ENCODE measurements at regions of chr12 and their contacts with region 1.

Region 1: DNA sequence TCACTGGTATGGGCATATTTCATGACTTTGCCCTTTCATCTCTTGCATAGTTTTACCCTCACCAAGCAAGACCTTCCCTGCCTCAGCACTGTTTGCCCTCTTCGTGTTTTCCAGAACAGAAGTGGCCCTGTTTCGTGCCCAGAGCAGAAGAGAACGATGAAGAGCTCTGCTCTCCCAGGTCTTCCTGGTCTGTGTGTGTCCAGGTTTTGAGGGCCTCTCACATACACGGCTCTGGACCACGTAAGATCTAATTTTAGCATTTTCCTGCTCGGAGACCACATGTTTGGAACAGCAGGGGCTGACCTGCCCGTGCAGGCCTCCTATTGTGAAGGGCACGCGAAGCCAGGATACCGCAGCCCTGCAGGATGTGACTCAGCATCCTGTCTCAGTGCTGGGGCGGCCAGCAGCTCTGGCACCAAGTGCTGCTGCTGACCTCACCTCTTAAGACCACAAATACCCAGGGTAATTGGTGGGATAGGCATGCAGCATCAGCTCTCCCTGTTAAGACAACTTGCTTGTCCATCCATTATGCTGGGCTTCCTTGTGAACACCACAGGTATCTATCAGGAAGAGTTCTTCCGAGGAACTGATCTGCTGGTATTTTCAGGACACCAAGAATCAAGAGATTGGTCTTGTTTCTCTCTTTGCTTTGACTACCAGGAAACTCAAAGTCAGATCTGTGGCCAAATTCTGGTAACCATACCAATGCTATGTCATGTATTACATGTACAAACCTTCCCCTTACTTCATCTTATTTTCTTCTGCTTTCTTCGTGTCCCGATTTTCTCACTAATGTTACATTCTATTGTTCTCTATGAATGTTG is 19.0 kb downstream of the SSH1 start:
- DNase-seq: peak; percentile 94 to 98 (median 98)
- H3K4me3 ChIP-seq: peak overlapping the region in 2 of 7 experiments; percentile 23 to 49
- H3K27ac ChIP-seq: peak overlapping the region; percentile 80 to 92
- H3K4me1 ChIP-seq: peaks cover 10 to 65% (median 48%) of the 10 kb centered on the region in 4 experiments
- H3K27me3 ChIP-seq: no peaks in the 10 kb centered on the region

Region 2: DNA sequence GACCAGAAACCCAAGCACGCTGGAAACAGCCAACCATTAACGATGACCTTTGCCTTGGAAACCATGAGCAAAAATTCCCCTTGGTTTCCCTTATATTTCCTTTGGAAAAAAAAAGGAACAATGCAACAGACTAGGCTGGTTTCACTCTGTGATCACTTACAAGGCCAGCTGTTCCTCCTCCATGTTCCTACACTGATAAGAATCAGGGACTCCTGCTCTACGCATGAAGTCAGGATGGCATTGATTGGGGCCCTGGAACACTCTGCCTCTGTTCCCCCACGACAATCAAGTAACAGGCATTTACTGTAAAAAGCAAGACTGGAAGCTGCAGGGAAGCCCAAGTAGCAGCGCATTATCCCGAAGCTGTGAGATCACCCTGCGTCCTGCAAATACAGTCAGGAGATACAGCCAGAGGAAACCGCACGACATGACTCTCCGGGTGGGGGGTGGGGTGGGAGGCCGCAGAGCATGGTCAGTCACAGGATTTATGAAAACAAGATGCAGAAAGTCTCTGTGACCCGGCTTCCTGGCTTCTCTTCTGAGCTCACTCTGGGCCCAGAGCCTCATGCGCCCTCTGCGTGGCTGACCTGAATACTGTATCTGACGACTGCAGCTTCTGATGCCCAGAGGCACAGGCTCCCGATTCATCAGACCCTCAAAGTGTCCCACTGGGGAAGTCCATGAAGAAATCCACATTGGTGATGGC is 12.2 kb before region 1 on chr12:
- CTCF ChIA-PET with region 1: interaction called, 25 read pairs
- POLR2A ChIA-PET with region 1: interaction called, 18 read pairs
- DNase-seq: peak in 2 of 3 donors; percentile 47 to 56
- H3K4me3 ChIP-seq: peak overlapping the region in 4 of 7 experiments; percentile 37 to 65 (median 42)
- H3K27ac ChIP-seq: peak overlapping the region in 1 of 2 experiments; percentile 52
- H3K4me1 ChIP-seq: peaks cover 6 to 61% (median 40%) of the 10 kb centered on the region in 4 experiments
- H3K27me3 ChIP-seq: no peaks in the 10 kb centered on the region

Region 3: DNA sequence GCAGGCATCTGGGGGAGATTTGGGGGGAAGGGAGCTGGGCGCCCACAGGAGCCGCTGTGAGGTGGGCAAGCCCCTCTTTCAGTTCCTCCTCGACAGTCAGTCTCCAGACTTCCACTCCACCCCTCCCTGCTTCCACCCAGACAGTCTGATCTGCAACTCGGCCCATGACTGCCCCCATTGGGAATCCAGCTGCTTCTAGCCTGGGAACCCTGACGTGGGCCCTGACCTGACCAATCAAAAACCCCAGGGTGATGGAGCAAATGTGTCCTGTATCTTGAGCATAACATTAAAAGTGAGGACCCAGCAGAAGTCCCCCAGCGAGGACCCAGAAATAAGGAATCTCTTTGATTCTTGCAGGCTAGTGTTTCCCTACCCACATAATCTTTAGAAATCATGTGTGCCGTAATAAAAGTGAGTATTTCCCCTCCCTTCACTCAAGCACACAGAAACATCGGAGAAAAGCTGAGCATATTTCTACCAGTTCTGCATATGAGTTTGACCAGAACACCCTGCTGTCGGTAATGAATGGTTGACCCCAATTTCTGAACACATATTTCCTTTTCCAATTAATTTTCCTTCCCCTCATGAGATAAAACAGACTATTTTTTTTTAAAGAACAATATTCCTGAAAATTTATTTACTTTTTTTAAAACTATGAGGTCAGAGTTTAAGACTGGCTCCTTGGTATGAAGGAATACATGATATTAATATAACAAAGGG is 12.6 kb after region 1 on chr12:
- CTCF ChIA-PET with region 1: interaction called, 54 read pairs
- POLR2A ChIA-PET with region 1: interaction called, 25 read pairs
- DNase-seq: peak; percentile 78 to 87 (median 83)
- H3K4me3 ChIP-seq: no peak overlapping the region
- H3K27ac ChIP-seq: peak overlapping the region in 1 of 2 experiments; percentile 12
- H3K4me1 ChIP-seq: peaks cover 4 to 49% (median 20%) of the 10 kb centered on the region in 4 experiments
- H3K27me3 ChIP-seq: no peaks in the 10 kb centered on the region